IMR-90 (cell line): ENCODE measurements at regions of chr1 and their contacts with region 1.

Region 1: DNA sequence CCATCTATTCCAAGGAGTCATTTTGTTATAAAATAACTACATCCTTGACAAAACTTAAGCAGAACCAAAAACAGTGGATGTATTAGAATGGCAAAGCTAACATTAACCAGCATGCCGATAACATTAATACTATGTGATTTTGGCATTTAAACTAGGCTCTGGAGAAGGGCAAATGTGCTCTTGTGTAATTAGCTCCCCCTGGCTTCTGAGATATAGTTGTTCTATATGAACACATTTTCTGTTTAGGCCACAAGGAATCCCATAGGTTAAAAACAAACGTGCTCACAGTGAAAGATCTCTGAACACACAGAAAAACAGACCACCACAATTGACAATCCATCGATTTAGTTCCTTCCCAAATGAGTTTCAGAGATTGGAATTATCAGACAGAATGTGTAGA is 57.4 kb upstream of the TARS2 start:
- DNase-seq: peak; percentile 7
- ATAC-seq: no peak
- H3K4me3 ChIP-seq: no peak overlapping the region
- H3K27ac ChIP-seq: no peak overlapping the region
- H3K4me1 ChIP-seq: no peaks in the 10 kb centered on the region
- H3K27me3 ChIP-seq: no peaks in the 10 kb centered on the region
- CTCF ChIP-seq: no peak
- POLR2A ChIP-seq: no peak
- RAD21 ChIP-seq: no peak

Region 2: GRCh38 chr1:150372580-150372979 is 57.2 kb before region 1 on chr1:
- CTCF ChIA-PET with region 1: no interaction called
- POLR2A ChIA-PET with region 1: no interaction called
- dilution Hi-C with region 1: no loop called
- in situ Hi-C with region 1: no loop called
- intact Hi-C with region 1: loop called (anchors 10 kb)
- DNase-seq: no peak
- ATAC-seq: no peak
- H3K4me3 ChIP-seq: no peak overlapping the region
- H3K27ac ChIP-seq: no peak overlapping the region
- H3K4me1 ChIP-seq: peaks cover 1% of the 10 kb centered on the region; the same call in 1 of the 2 replicates
- H3K27me3 ChIP-seq: no peaks in the 10 kb centered on the region
- CTCF ChIP-seq: no peak
- POLR2A ChIP-seq: no peak
- RAD21 ChIP-seq: no peak

Region 3: GRCh38 chr1:150387200-150387599 is 42.6 kb before region 1 on chr1:
- CTCF ChIA-PET with region 1: no interaction called
- POLR2A ChIA-PET with region 1: no interaction called
- dilution Hi-C with region 1: no loop called
- in situ Hi-C with region 1: no loop called
- intact Hi-C with region 1: no loop called
- DNase-seq: no peak
- ATAC-seq: no peak
- H3K4me3 ChIP-seq: no peak overlapping the region
- H3K27ac ChIP-seq: no peak overlapping the region
- H3K4me1 ChIP-seq: peaks cover 1% of the 10 kb centered on the region; the same call in 1 of the 2 replicates
- H3K27me3 ChIP-seq: no peaks in the 10 kb centered on the region
- CTCF ChIP-seq: no peak
- POLR2A ChIP-seq: no peak
- RAD21 ChIP-seq: no peak

Region 4: GRCh38 chr1:150979092-150980056 is 549.6 kb after region 1 on chr1:
- CTCF ChIA-PET with region 1: no interaction called
- POLR2A ChIA-PET with region 1: no interaction called
- dilution Hi-C with region 1: no loop called
- in situ Hi-C with region 1: no loop called
- intact Hi-C with region 1: no loop called
- DNase-seq: peak; percentile 85
- ATAC-seq: peak; percentile 32
- H3K4me3 ChIP-seq: no peak overlapping the region
- H3K27ac ChIP-seq: no peak overlapping the region
- H3K4me1 ChIP-seq: peaks cover 22% of the 10 kb centered on the region
- H3K27me3 ChIP-seq: no peaks in the 10 kb centered on the region; the same call in 1 of the 2 replicates
- CTCF ChIP-seq: peak; percentile 100; the same call in 1 of the 2 replicates
- POLR2A ChIP-seq: no peak
- RAD21 ChIP-seq: peak; percentile 73